A549 (cell line): ENCODE measurements at regions of chr15 and their contacts with region 1.

Region 1: DNA sequence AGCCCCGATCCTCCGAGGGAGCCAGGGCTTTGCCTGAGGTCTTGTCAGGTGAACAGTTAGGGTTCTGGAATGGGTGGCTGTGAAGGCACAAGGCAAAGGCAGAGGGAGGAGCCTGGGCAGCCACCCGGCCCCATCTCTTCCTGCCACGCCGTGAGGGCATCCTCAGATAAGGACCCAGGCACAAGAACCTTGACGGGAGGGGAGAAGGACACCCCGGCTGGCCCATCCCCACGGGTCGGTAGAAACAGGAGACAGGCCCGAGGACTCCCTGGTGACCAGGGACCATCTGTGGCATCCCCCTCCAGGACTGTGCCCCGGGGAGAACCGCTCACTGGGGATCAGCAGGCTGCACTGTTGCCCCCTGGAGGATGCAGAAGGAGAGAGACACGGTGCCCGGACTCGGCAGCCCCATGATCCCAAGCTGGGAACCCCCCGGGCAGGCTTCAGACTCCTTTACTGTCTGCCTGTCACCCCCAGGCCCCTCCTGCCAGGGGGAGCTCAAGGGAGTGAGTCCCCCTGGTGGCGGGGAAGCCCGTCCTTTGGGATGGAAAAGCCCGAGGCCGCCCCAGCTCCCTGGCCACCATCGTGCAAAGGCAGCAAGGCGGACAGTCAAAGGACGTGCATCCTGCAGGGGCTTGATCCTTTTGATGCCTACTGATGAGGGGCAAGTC is 12.3 kb upstream of the PCSK6 start:
- DNase-seq: peak; percentile 51 to 87
- ATAC-seq: peak; percentile 92 to 98
- H3K4me3 ChIP-seq: no peak overlapping the region
- H3K27ac ChIP-seq: peak overlapping the region; percentile 51 to 54; a peak in 5 of 6 replicates
- H3K4me1 ChIP-seq: 0 out of 3 replicates have a peak, but pooled peaks cover 6% of the 10 kb centered on the region
- CTCF ChIP-seq: peak; percentile 76
- EP300 ChIP-seq: no peak
- POLR2A ChIP-seq: no peak
- RAD21 ChIP-seq: peak; percentile 65 to 67

Region 2: GRCh38 chr15:101288908-101289513 is 212.8 kb before region 1 on chr15:
- CTCF ChIA-PET with region 1: interaction called, 31 read pairs
- POLR2A ChIA-PET with region 1: interaction called, 3 read pairs
- DNase-seq: peak; percentile 73 to 85
- ATAC-seq: peak; percentile 73 to 78; a peak in 4 of 6 replicates
- H3K4me3 ChIP-seq: no peak overlapping the region
- H3K27ac ChIP-seq: no peak overlapping the region
- H3K4me1 ChIP-seq: peaks cover 19% of the 10 kb centered on the region
- CTCF ChIP-seq: peak; percentile 89
- EP300 ChIP-seq: no peak
- POLR2A ChIP-seq: no peak
- RAD21 ChIP-seq: peak; percentile 47 to 54

Region 3: GRCh38 chr15:101307048-101307896 is 194.6 kb before region 1 on chr15:
- CTCF ChIA-PET with region 1: interaction called, 98 read pairs
- POLR2A ChIA-PET with region 1: no interaction called
- DNase-seq: no peak
- ATAC-seq: peak in 1 of 2 experiments; percentile 11; a peak in 3 of 6 replicates
- H3K4me3 ChIP-seq: no peak overlapping the region
- H3K27ac ChIP-seq: no peak overlapping the region
- H3K4me1 ChIP-seq: no peaks in the 10 kb centered on the region
- CTCF ChIP-seq: no peak
- EP300 ChIP-seq: no peak
- POLR2A ChIP-seq: no peak
- RAD21 ChIP-seq: no peak

Region 4: DNA sequence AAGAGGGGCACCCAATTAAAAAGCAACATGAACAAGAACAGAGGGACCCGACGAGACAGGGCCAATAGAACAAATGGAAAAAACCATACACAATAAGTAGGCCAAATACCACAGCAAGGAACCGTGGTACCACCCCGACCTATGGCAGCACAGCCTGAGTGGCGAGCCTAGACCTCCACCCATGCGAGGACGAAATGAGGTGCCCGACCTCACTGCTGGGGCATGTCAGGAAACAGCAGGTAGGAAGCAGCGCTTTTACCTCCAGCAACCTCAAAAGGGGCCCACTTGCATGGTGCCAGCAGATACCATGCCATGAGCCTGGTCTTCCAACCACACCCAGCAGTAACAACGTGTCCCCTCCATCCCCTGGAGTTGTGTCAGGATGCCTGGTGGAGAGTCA is 90.3 kb before region 1 on chr15:
- CTCF ChIA-PET with region 1: no interaction called
- POLR2A ChIA-PET with region 1: no interaction called
- DNase-seq: no peak
- ATAC-seq: no peak
- H3K4me3 ChIP-seq: no peak overlapping the region
- H3K27ac ChIP-seq: no peak overlapping the region
- H3K4me1 ChIP-seq: no peaks in the 10 kb centered on the region
- CTCF ChIP-seq: no peak
- EP300 ChIP-seq: no peak
- POLR2A ChIP-seq: no peak
- RAD21 ChIP-seq: no peak

Region 5: GRCh38 chr15:101434031-101434920 is 67.6 kb before region 1 on chr15:
- CTCF ChIA-PET with region 1: interaction called, 10 read pairs
- POLR2A ChIA-PET with region 1: no interaction called
- DNase-seq: no peak
- ATAC-seq: no peak
- H3K4me3 ChIP-seq: no peak overlapping the region
- H3K27ac ChIP-seq: no peak overlapping the region
- H3K4me1 ChIP-seq: peaks cover 26% of the 10 kb centered on the region
- CTCF ChIP-seq: no peak
- EP300 ChIP-seq: no peak
- POLR2A ChIP-seq: no peak
- RAD21 ChIP-seq: no peak

Region 6: DNA sequence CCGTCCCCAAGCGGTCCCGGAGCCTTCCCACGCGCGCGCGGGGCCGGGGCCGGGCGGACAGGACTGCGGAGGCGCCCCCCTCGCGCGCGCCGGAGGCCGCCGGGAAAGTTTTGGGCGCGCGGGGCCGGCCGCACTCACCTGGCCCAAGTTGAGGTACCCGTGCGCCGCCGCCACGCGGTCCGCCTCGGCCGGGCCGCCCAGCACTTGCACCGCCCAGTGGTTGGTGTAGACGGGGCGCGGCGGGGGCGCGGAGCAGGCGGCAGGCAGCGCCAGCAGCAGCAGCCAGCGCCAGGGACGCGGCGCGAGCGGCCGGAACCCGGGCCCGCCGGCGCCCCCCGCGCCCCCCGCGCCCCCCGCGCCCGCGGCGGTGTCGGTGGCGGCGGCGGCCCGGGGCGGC is 12.6 kb before region 1 on chr15:
- CTCF ChIA-PET with region 1: interaction called, 30 read pairs
- POLR2A ChIA-PET with region 1: no interaction called
- DNase-seq: peak; percentile 69 to 70
- ATAC-seq: peak; percentile 79 to 80
- H3K4me3 ChIP-seq: peak overlapping the region; percentile 82
- H3K27ac ChIP-seq: peak overlapping the region; percentile 83 to 96
- H3K4me1 ChIP-seq: peaks cover 8% of the 10 kb centered on the region; the same call in 2 of the 3 replicates
- CTCF ChIP-seq: no peak
- EP300 ChIP-seq: no peak
- POLR2A ChIP-seq: peak; percentile 26; the same call in 1 of the 2 replicates
- RAD21 ChIP-seq: no peak

Region 7: DNA sequence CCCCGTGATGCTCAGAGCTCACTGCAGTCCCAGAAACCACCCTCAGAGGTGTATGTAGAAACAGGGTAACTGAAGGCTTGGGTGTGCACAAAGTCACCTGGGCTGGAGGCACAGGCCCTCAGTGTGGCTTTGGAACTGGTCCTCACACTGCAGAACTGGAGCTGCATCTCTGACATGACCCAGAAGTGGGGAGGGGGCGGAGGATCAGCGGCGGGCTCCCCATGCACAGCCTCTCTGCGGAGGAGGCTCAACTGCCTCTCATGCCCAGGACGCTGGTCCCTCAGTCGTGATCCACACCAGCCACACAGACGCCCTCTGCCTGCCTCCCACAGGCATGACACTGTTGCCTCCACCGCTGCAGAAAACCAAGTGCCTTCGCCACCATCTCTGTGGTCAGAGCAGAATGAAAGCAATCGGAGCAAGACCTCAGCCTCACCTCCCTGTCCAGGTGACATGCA is 76.6 kb after region 1 on chr15:
- CTCF ChIA-PET with region 1: interaction called, 10 read pairs
- POLR2A ChIA-PET with region 1: no interaction called
- DNase-seq: peak; percentile 70 to 88
- ATAC-seq: peak; percentile 83 to 90
- H3K4me3 ChIP-seq: no peak overlapping the region
- H3K27ac ChIP-seq: peak overlapping the region; percentile 38 to 67; a peak in 4 of 6 replicates
- H3K4me1 ChIP-seq: peaks cover 31% of the 10 kb centered on the region
- CTCF ChIP-seq: peak; percentile 54
- EP300 ChIP-seq: no peak
- POLR2A ChIP-seq: no peak
- RAD21 ChIP-seq: peak; percentile 62 to 74

Region 8: DNA sequence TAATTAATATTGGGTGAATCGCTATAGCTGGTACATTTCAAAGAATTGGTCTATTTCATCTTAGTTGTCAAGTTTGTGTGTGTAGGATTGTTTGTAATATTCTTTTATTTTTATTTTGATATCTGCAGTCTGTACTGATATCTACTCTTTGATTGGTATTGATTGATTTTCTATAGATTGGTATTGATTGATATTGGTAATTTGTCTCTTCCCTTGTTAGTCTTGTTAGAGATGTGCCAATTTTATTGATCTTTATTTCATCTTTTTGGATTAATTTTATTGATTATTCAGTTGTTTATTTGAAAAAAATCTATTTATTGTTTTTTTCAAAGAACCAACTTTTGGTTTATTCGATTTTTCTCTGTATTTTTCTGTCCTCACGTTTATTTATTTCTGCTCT is 88.9 kb after region 1 on chr15:
- CTCF ChIA-PET with region 1: no interaction called
- POLR2A ChIA-PET with region 1: no interaction called
- DNase-seq: no peak
- ATAC-seq: no peak
- H3K4me3 ChIP-seq: no peak overlapping the region
- H3K27ac ChIP-seq: no peak overlapping the region
- H3K4me1 ChIP-seq: no peaks in the 10 kb centered on the region
- CTCF ChIP-seq: no peak
- EP300 ChIP-seq: no peak
- POLR2A ChIP-seq: no peak
- RAD21 ChIP-seq: no peak